ENCODE measurements at regions of chr5 and their contacts with region 1.

Region 1: GRCh38 chr5:87412630-87413342 is at the start of gene CCNH:
- DNase-seq: peak; percentile 98
- ATAC-seq: peak; percentile 99
- H3K4me3 Mint-ChIP-seq: peak within 1 kb of the TSS; percentile 98
- H3K27ac Mint-ChIP-seq: peak within 1 kb of the TSS; percentile 97
- H3K4me1 Mint-ChIP-seq: peaks cover 33% of the 10 kb centered on the region
- H3K27me3 Mint-ChIP-seq: no peaks in the 10 kb centered on the region
- total RNA-seq, gene CCNH: 62.7 to 111 TPM

Region 2: DNA sequence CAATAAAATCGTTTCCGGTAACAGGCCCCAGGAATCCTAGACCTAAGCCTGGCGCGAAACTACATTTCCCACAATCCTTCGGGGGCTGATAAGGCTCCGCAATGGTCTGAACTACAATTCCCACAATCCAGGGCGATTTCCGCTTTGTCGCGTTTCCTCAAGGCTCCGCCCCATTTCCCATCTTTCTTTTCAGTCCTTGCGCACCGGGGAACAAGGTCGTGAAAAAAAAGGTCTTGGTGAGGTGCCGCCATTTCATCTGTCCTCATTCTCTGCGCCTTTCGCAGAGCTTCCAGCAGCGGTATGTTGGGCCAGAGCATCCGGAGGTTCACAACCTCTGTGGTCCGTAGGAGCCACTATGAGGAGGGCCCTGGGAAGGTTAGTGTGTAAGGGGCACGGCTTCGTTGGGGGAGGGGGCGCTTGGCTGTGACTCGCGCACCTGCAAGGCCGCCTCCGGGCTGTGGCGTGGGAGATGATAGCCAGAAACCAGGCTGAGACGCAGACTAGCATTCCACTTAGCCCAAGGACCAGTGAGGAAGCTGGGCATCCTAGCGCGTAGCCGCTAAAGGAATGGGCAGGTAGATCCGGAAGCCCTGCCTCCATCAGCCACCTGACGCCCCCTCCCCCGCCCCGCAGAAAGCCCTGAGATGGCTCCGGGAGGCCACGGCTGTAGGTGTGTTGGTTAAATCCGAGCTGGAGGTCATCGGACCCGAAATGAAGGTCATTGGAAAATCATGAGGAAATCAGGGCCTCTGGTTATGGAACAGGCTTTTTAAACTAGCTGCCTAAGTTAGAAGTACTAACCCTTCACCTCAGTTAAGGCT is 794.8 kb before region 1 on chr5 and contains the start of gene COX7C:
- CTCF ChIA-PET with region 1: no interaction called
- POLR2A ChIA-PET with region 1: no interaction called
- intact Hi-C with region 1: loop called (anchors 1 to 2 kb)
- DNase-seq: peak; percentile 94
- ATAC-seq: peak; percentile 99
- H3K4me3 Mint-ChIP-seq: peak within 1 kb of the TSS; percentile 100
- H3K27ac Mint-ChIP-seq: peak within 1 kb of the TSS; percentile 100
- H3K4me1 Mint-ChIP-seq: peaks cover 23% of the 10 kb centered on the region
- H3K27me3 Mint-ChIP-seq: peaks cover 6% of the 10 kb centered on the region
- total RNA-seq, gene COX7C: 438 to 701 TPM

Region 3: DNA sequence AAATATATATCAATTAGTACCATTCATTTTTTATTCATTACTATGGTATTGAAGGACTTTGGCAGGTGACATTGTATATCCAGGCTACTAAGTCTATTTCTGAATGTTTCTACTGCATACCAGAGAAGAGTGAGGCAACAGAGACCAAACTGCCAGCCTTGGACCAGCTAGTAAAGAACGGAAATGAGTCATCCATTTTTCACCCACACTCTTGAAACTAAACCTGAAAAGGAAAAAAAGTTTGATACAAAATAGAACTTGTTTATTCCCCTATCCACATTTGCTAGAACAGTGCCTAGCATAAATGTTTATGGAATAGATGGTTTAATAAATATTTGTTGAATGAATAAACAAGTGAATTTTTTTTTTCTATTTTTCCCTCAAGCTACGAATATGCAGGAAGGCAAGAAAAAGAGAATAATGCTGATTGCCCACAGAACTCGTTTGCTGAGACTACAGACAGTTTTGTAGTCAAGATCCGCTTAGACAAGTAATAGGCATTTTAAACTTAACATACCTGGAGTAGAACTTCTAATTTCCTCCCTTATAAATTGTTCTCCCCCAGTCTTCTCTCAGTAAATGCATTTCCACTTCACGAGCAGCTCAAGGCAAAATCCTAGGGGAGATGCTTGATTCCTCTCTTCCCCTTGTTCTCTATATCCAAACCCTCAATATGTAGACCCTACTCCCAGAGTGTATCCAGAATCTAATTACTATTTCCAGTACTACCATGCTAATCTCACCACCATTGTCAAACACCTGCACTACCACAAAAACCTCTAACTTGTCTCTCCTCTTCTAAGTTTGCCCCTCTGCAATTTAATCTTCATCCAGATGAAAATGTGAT is 291.3 kb before region 1 on chr5:
- CTCF ChIA-PET with region 1: no interaction called
- POLR2A ChIA-PET with region 1: no interaction called
- intact Hi-C with region 1: loop called (anchors 2 to 5 kb)
- DNase-seq: peak; percentile 51
- ATAC-seq: peak; percentile 76
- H3K4me3 Mint-ChIP-seq: peak overlapping the region; percentile 26
- H3K27ac Mint-ChIP-seq: peak overlapping the region; percentile 44
- H3K4me1 Mint-ChIP-seq: peaks cover 57% of the 10 kb centered on the region
- H3K27me3 Mint-ChIP-seq: peaks cover 2% of the 10 kb centered on the region

Region 4: DNA sequence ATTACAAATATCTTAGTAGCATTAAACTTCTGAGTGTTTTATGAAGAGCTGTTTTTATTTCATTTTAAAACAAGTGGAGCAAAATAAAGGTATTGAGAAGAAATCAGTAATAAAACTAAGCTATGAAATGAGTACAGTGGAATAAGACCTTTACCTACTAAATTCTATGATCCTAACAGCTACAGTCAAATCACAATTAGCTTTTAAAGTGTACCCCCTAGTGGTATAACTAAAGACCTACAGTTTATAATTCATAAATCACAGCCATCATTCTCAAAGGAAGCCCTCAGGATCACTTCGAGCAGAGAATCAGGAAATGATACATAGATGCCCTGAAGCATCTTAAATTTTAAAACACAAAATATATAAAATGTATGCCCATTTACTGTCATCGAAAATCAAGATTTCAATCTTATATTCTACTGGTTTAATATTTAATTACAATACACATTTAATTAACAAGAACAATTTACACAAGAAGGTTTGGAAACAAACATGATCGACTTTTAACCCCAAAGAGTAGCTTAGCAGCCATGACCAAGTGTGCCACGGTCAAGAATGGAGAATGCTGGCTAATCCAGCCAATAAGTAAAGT is 12.4 kb before region 1 on chr5:
- CTCF ChIA-PET with region 1: interaction called, 25 read pairs
- POLR2A ChIA-PET with region 1: interaction called, 3 read pairs
- intact Hi-C with region 1: no loop called
- DNase-seq: no peak
- ATAC-seq: peak; percentile 77
- H3K4me3 Mint-ChIP-seq: no peak overlapping the region
- H3K27ac Mint-ChIP-seq: no peak overlapping the region
- H3K4me1 Mint-ChIP-seq: peaks cover 30% of the 10 kb centered on the region
- H3K27me3 Mint-ChIP-seq: no peaks in the 10 kb centered on the region

Region 5: GRCh38 chr5:88140856-88141752 is 728.3 kb after region 1 on chr5:
- CTCF ChIA-PET with region 1: no interaction called
- POLR2A ChIA-PET with region 1: no interaction called
- intact Hi-C with region 1: loop called in 1 of 2 experiments (anchors 5 kb)
- DNase-seq: peak; percentile 93
- ATAC-seq: peak; percentile 93
- H3K4me3 Mint-ChIP-seq: no peak overlapping the region
- H3K27ac Mint-ChIP-seq: no peak overlapping the region
- H3K4me1 Mint-ChIP-seq: peaks cover 20% of the 10 kb centered on the region
- H3K27me3 Mint-ChIP-seq: peaks cover 36% of the 10 kb centered on the region

Region 6: DNA sequence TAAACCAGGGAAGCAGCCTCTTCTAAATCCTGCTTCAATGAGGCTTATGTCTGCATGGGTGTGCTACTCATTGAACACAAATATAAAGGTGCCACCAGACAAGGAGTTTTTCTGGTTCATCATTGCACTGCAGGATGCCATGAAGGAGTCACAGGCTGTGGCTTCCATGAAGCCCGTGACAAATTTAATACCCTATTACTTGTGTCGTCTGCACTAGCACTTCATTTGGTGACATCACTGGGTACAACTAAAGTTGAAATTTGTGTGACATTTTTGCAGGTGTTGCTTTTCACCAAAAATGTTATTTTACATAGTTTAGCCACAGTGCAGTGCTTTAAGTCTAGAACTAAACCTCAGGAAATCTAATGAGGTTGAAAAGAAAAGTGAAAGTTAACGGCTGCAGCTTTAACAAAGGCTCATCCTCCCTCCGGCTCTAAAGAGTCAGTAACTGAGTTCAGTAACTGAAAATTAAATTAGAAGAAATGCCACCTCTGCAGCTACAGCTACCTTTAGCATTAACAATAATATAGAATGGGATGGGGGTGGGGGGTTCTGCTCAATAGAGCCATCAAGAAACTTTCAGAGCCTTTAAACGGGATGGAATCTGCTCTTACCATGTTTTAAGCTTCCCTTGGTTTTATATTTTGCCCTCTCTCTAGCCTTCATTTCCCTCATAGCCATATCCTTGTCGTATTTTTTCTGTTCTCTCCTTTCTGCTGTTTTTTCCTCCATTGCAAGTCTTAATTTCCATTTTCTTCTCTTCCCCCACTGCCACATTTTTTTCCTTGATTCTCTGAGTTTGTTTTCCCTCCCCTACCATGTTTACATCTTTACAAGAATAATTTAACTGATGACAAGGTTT is 1089.6 kb after region 1 on chr5:
- CTCF ChIA-PET with region 1: no interaction called
- POLR2A ChIA-PET with region 1: no interaction called
- intact Hi-C with region 1: loop called in 1 of 2 experiments (anchors 10 kb)
- DNase-seq: peak; percentile 8
- ATAC-seq: peak; percentile 77
- H3K4me3 Mint-ChIP-seq: peak overlapping the region; percentile 76
- H3K27ac Mint-ChIP-seq: peak overlapping the region; percentile 87
- H3K4me1 Mint-ChIP-seq: peaks cover 10% of the 10 kb centered on the region
- H3K27me3 Mint-ChIP-seq: peaks cover 1% of the 10 kb centered on the region